HCT116 (cell line): ENCODE measurements at regions of chr7 and their contacts with region 1.

Region 1: GRCh38 chr7:16357921-16358320 is 63.4 kb downstream of the CRPPA start:
- DNase-seq: no peak
- ATAC-seq: no peak
- H3K4me3 ChIP-seq: no peak overlapping the region
- H3K27ac ChIP-seq: no peak overlapping the region
- H3K4me1 ChIP-seq: no peaks in the 10 kb centered on the region
- H3K27me3 ChIP-seq: no peaks in the 10 kb centered on the region
- CTCF ChIP-seq: no peak
- POLR2A ChIP-seq: no peak
- RAD21 ChIP-seq: no peak

Region 2: DNA sequence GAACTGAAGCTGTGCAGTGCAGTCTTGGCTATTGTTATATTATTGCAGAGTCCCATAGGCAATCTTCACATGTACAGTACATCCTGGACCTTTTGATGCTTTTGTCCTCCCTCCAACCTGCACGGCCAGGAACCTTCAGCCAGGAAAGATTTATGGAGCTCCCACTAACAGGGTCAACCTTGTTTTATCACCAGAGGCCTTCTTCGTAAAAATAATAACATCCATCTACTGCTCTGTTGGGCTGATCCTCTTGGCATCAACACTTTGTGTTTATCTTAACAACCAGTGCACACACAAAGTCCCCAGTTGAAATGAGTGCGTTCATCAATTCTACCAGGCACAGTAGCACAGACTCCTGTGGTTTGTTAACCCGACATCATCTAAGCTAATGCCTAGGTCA is 868.5 kb before region 1 on chr7:
- CTCF ChIA-PET with region 1: no interaction called
- POLR2A ChIA-PET with region 1: no interaction called
- RAD21 ChIA-PET with region 1: no interaction called
- intact Hi-C with region 1: no loop called
- DNase-seq: no peak
- ATAC-seq: no peak
- H3K4me3 ChIP-seq: no peak overlapping the region
- H3K27ac ChIP-seq: no peak overlapping the region
- H3K4me1 ChIP-seq: no peaks in the 10 kb centered on the region
- H3K27me3 ChIP-seq: no peaks in the 10 kb centered on the region
- CTCF ChIP-seq: no peak
- POLR2A ChIP-seq: no peak
- RAD21 ChIP-seq: no peak

Region 3: DNA sequence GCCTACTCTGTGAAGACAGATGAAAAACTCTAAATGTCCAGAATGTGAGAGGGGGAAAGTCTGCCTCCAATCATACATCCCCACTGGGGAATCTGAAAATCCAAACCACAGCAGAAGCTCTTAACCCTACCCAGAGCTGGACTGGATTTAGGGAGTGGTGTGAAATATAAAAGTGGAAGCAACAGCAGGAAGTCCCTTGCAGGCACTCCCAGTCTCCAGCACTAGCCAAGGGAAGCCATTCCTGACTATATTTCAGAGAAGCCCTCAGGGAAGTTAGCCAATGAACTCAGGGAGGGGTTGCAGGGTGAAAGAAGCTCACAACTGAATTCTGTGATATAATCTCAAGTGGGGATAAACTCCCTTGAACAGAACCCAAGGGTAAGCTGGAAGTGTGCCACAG is 11.9 kb after region 1 on chr7:
- CTCF ChIA-PET with region 1: no interaction called
- POLR2A ChIA-PET with region 1: no interaction called
- RAD21 ChIA-PET with region 1: no interaction called
- intact Hi-C with region 1: loop called (anchors 1 kb)
- DNase-seq: no peak
- ATAC-seq: no peak
- H3K4me3 ChIP-seq: no peak overlapping the region
- H3K27ac ChIP-seq: no peak overlapping the region
- H3K4me1 ChIP-seq: no peaks in the 10 kb centered on the region
- H3K27me3 ChIP-seq: no peaks in the 10 kb centered on the region
- CTCF ChIP-seq: no peak
- POLR2A ChIP-seq: no peak
- RAD21 ChIP-seq: no peak